ENCODE measurements at regions of chr14 and their contacts with region 1.

Region 1: DNA sequence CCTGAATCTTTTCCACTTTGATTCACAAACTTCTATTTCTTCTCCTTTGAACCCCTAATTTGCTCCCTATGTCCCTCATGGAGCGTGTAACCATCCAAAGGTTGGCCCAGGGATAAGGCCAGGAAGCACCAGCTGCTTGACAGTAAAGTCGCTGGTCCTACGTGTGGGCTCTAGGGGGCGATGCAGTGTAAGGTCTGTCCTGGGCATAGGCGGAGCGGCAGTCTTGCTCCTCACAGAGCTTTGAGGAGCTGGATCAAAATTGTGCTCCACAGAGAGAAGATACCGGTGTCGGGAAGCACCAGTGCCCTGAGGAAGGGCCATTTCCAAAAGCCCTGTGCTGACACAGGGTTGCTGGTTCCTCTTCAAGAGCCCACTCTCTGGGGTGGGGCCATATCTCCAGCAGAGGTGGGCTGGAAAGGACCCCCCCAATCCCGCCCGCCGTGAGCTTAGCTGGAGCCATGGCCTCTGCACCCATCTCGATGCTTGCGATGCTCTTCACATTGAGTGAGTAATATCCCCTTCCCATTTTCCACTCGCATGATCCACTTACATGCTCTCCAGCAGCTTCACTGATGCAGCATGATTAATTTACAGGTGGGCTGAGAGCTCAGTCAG is 49.9 kb upstream of the OR4E1 start:
- DNase-seq: peak; percentile 68
- ATAC-seq: peak; percentile 93
- H3K4me3 Mint-ChIP-seq: peak overlapping the region; percentile 71
- H3K27ac Mint-ChIP-seq: peak overlapping the region; percentile 43
- H3K4me1 Mint-ChIP-seq: no peaks in the 10 kb centered on the region
- H3K27me3 Mint-ChIP-seq: peaks cover 29% of the 10 kb centered on the region
- CTCF ChIP-seq: peak; percentile 38

Region 2: DNA sequence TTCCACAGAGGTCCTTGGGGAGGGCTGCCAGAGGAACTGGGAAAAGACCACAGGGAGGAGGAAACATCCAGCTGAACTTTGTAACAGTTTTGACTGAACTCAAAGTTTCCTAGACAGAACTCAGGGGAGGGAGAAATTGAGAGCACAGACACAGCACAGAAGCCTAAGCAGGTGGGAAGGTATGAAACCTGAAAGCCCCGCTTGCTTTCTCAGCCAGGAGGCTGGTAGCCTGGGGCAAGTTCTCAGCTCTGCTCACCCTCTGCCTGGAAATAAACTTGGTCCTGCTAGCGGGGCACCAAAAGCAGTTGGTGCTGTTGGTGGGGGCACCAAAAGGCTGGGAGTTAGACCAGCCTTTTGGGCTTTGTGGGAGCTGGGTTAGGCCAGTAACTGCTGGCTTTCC is 24.0 kb before region 1 on chr14:
- CTCF ChIA-PET with region 1: interaction called, 10 read pairs
- POLR2A ChIA-PET with region 1: no interaction called
- intact Hi-C with region 1: no loop called
- DNase-seq: no peak
- ATAC-seq: no peak
- H3K4me3 Mint-ChIP-seq: no peak overlapping the region
- H3K27ac Mint-ChIP-seq: no peak overlapping the region
- H3K4me1 Mint-ChIP-seq: peaks cover 15% of the 10 kb centered on the region
- H3K27me3 Mint-ChIP-seq: peaks cover 11% of the 10 kb centered on the region
- CTCF ChIP-seq: no peak

Region 3: DNA sequence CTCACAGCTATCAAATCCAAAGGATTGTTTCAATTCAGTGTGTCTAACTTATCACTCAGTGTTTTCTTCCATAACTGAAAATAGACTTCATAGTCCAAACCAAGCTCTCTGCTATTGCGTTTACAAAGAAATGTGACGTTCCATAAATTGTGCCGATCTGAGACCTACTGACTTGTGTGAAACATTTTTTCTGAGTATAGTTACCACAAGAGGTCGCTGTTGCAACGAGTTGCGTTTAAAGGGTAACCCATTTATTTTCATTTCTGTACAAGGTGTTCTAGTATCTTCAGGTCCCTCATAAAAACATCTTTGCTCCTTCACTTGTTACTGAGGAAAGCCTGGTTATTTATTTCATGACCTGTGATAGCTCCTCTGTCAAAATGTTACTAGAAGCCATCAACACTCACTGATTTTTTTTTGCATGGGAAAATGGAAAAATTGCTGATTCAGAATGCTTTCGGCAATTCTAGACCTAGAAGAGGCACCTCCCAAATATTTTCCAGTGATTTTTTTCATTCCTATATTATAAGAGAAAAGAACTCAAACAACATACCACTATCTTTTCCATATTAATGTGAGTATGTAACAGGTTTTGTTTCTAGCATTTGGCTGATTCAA is 11.0 kb after region 1 on chr14:
- CTCF ChIA-PET with region 1: interaction called, 27 read pairs
- POLR2A ChIA-PET with region 1: interaction called, 3 read pairs
- intact Hi-C with region 1: no loop called
- DNase-seq: peak; percentile 57
- ATAC-seq: peak; percentile 50
- H3K4me3 Mint-ChIP-seq: peak overlapping the region; percentile 62
- H3K27ac Mint-ChIP-seq: no peak overlapping the region
- H3K4me1 Mint-ChIP-seq: peaks cover 14% of the 10 kb centered on the region
- H3K27me3 Mint-ChIP-seq: peaks cover 21% of the 10 kb centered on the region
- CTCF ChIP-seq: peak; percentile 86

Region 4: GRCh38 chr14:21863289-21863688 is 139.8 kb after region 1 on chr14:
- CTCF ChIA-PET with region 1: no interaction called
- POLR2A ChIA-PET with region 1: no interaction called
- intact Hi-C with region 1: no loop called
- DNase-seq: no peak
- ATAC-seq: no peak
- H3K4me3 Mint-ChIP-seq: peak overlapping the region; percentile 62
- H3K27ac Mint-ChIP-seq: peak overlapping the region; percentile 77
- H3K4me1 Mint-ChIP-seq: peaks cover 21% of the 10 kb centered on the region
- H3K27me3 Mint-ChIP-seq: peaks cover 5% of the 10 kb centered on the region
- CTCF ChIP-seq: no peak

Measured in activated CD8-positive, alpha-beta T cell treated with anti-CD3 and anti-CD28 coated beads for 36 hours (primary cell).